ENCODE measurements at regions of chr11 and their contacts with region 1.

Region 1: GRCh38 chr11:18634140-18635032 is at the start of gene SPTY2D1:
- DNase-seq: peak; percentile 99
- H3K4me3 ChIP-seq: peak within 1 kb of the TSS; percentile 78 to 98 (median 97)
- H3K27ac ChIP-seq: peak within 1 kb of the TSS; percentile 89
- H3K4me1 ChIP-seq: peaks cover 5% of the 10 kb centered on the region
- H3K27me3 ChIP-seq: no peaks in the 10 kb centered on the region
- CTCF ChIP-seq: peak in 1 of 2 donors; percentile 4
- total RNA-seq, gene SPTY2D1: 18.0 to 20.7 TPM

Region 2: GRCh38 chr11:18650859-18651557 is 16.6 kb after region 1 on chr11:
- CTCF ChIA-PET with region 1: no interaction called
- dilution Hi-C with region 1: no loop called
- in situ Hi-C with region 1: no loop called
- intact Hi-C with region 1: no loop called
- DNase-seq: no peak
- H3K4me3 ChIP-seq: no peak overlapping the region
- H3K27ac ChIP-seq: no peak overlapping the region
- H3K4me1 ChIP-seq: no peaks in the 10 kb centered on the region
- H3K27me3 ChIP-seq: no peaks in the 10 kb centered on the region
- CTCF ChIP-seq: peak; percentile 50 to 69

Region 3: GRCh38 chr11:18698341-18699268 is 64.2 kb after region 1 on chr11 and contains the start of gene TMEM86A:
- CTCF ChIA-PET with region 1: no interaction called
- dilution Hi-C with region 1: no loop called
- in situ Hi-C with region 1: no loop called
- intact Hi-C with region 1: loop called (anchors 5 kb)
- DNase-seq: peak; percentile 73
- H3K4me3 ChIP-seq: peak within 1 kb of the TSS; percentile 58 to 64 (median 59)
- H3K27ac ChIP-seq: no peak within 1 kb of the TSS
- H3K4me1 ChIP-seq: peaks cover 25% of the 10 kb centered on the region
- H3K27me3 ChIP-seq: peaks cover 3% of the 10 kb centered on the region
- CTCF ChIP-seq: no peak
- total RNA-seq, gene TMEM86A: 2.0 to 3.3 TPM

Region 4: DNA sequence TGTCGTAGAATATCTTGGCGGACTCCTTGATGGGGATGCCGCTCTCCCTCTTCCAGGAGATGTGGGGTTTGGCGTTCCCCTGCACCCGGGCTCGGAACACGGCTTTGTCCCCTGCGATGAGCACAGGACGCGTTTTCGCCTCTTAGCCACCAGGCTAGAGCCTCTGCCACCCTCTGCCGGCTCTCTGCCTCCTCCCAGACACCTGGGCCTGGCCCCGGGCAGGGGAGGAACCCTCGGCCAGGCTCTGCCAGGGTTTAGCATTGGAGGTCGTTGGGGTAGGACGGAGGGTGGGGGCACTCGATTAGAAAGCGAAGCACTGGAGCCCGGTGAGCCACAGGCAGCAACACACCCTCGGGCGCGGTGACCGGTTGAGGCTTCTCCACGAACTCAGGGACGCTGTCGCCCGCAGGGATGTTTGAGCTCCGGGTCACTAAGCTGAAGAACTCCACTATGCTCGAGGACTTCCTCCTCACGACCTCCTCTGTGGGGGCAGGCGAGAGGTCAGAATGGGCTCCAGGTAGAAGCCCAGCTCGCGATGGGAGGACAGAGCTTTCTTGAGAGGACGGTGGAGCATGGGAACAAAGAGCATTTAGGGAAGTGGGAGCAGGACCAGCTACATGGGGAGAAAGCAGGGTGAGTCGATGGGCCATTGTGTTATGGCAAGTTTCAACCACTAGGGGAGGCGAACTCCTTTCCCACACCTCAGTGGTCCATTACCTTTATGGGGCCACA is 87.3 kb after region 1 on chr11:
- CTCF ChIA-PET with region 1: no interaction called
- dilution Hi-C with region 1: no loop called
- in situ Hi-C with region 1: no loop called
- intact Hi-C with region 1: loop called (anchors 5 kb)
- DNase-seq: peak; percentile 14
- H3K4me3 ChIP-seq: peak overlapping the region; percentile 33 to 43 (median 42)
- H3K27ac ChIP-seq: no peak overlapping the region
- H3K4me1 ChIP-seq: peaks cover 11% of the 10 kb centered on the region
- H3K27me3 ChIP-seq: no peaks in the 10 kb centered on the region
- CTCF ChIP-seq: peak; percentile 55 to 67

Measured in mammary epithelial cell (primary cell).